ENCODE measurements at regions of chr10 and their contacts with region 1.

Region 1: DNA sequence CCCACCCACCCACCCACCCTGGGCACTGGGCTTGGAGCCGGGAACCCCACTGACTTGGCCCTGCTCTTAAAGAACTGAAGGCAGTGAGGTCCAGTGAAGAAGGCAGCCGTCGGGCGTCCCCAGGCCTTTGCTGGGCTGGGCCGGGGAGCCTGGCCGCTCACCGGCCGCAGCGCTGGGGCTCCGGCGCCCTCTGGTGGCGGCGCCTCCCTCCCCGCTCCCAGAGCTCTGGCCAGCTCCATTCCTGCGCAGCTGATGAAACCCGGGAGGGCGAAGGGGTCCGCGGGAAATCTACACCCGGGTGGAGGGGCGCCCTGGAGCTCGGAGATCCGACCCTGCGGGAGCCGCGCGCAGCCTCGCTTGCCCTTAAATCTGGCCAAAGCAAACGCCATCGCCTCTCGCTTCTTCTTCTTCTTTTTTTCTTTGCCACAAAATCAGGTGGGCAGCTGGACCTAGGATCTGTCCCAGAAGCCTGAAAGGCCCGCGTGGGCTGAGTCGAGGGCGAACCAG is 1.7 kb upstream of the CXCL12 start:
- DNase-seq: peak; percentile 73
- H3K4me3 Mint-ChIP-seq: no peak overlapping the region
- H3K27ac Mint-ChIP-seq: no peak overlapping the region
- H3K4me1 Mint-ChIP-seq: no peaks in the 10 kb centered on the region
- H3K27me3 Mint-ChIP-seq: peaks cover 48% of the 10 kb centered on the region
- CTCF ChIP-seq: peak; percentile 58

Region 2: DNA sequence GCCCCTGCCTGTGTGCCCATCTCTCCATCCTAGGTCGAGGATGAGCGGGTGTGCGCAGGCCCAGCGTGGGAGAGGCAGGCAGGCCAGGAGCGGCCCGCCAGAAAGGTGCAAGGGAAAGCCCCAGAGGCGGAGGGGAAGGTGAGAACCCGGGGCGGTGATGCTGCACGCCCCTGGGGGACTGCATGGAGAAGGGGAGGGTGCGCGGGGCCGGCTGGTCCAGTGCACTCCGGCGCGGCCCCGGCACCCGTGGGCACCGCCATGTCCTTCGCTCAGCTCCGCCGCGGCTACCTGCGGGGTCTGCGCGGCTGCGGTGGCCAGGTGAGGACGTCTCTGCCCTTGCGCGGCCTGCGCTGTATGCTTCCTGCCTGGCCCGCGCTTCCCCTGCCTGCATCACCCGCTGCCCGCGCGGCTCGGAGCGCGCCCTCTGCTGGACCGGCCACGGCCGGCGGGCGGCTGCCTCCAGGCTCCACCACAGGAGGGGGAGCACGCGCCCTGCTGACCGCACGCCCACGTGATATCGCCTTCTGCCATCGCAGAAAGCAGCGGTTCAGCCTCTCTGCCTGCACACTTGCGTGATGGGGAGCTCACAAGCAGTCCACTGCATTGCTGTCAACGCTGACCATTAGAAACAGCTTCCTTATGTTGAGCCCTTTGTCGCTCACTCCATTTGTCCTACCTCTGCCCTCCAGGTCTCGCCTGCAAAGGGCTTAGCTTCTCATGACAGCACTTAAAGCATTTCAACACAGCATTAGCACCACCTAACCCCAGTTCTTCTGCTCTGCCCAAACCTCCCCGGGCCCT is 75.6 kb before region 1 on chr10:
- CTCF ChIA-PET with region 1: no interaction called
- intact Hi-C with region 1: loop called (anchors 10 kb)
- DNase-seq: peak; percentile 78
- H3K4me3 Mint-ChIP-seq: no peak overlapping the region
- H3K27ac Mint-ChIP-seq: no peak overlapping the region
- H3K4me1 Mint-ChIP-seq: no peaks in the 10 kb centered on the region
- H3K27me3 Mint-ChIP-seq: no peaks in the 10 kb centered on the region
- CTCF ChIP-seq: peak; percentile 55

Region 3: DNA sequence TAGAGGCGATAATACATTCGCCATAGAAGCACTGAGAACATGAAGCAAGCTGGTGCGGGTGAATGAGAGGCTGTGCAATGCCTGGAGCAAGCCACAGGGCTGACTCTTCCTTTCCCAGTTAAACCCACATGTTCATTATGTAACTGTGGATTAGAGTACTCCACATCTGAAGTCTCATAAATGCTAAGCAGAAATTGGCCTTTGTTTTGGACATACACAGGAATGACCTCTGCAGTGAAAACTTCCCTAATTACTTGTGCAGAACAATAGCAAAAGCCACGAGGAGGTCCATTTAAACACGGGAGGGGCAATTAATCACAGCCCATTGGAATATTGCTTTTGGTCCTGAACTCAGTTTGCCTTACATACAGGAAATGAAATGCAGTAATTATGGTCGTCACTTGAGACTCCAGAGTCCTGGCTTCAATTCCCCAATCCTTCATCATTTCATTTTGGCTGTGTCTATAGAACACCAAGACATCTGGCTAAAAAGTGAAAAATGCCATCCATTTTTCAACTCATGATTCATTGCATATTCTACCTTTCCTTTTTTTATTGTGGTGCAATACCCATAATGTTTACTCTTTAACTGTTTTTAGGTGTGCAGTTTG is 77.0 kb after region 1 on chr10:
- CTCF ChIA-PET with region 1: no interaction called
- intact Hi-C with region 1: no loop called
- DNase-seq: no peak
- H3K4me3 Mint-ChIP-seq: no peak overlapping the region
- H3K27ac Mint-ChIP-seq: no peak overlapping the region
- H3K4me1 Mint-ChIP-seq: no peaks in the 10 kb centered on the region
- H3K27me3 Mint-ChIP-seq: peaks cover 43% of the 10 kb centered on the region
- CTCF ChIP-seq: no peak

Measured in Calu3 (cell line).